ENCODE measurements at regions of chr12 and their contacts with region 1.

Region 1: DNA sequence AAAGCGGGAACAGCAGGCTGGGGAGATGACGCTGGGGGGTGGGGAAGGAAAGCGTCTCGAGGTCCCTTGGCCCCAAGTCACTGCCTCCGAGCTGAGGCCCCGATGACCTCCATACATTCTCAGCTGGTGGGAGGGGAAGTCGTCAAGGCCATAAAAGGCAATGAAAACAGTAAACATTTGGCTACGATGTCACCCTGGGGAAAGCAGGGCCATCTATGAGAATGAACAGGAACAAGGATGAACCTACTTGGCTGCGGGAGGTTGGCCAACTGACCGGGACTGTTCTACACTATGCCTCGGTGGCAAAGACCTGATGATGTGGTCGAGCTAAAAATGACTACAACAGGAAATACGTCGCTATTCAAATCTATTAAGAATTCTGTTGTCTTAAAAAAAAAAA is 19.5 kb downstream of the PRKAB1 start:
- DNase-seq: no peak
- ATAC-seq: no peak
- H3K4me3 ChIP-seq: no peak overlapping the region
- H3K27ac ChIP-seq: no peak overlapping the region
- H3K4me1 ChIP-seq: peaks cover 6% of the 10 kb centered on the region
- H3K27me3 ChIP-seq: no peaks in the 10 kb centered on the region
- CTCF ChIP-seq: no peak
- POLR2A ChIP-seq: no peak
- RAD21 ChIP-seq: no peak

Region 2: DNA sequence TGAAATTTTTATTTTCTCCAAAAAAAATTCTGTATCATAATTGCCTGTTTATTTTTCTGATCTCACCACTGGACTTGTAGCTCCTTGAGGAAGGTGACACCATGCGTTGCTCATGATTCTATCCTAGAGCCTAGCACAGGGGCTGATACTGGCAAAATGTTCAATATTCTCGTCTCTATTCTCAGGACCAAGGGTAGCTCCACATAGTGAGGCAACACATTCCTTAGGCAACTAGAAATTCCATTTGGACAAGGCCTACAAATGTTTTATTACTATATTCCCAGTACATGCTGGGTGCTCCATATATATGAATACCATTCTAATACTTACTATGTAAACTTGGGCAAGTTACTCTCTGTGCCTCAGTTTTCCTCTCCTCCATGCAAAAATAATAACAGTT is 340.0 kb before region 1 on chr12:
- CTCF ChIA-PET with region 1: no interaction called
- POLR2A ChIA-PET with region 1: no interaction called
- dilution Hi-C with region 1: no loop called
- in situ Hi-C with region 1: no loop called
- intact Hi-C with region 1: no loop called
- DNase-seq: no peak
- ATAC-seq: no peak
- H3K4me3 ChIP-seq: no peak overlapping the region
- H3K27ac ChIP-seq: no peak overlapping the region
- H3K4me1 ChIP-seq: no peaks in the 10 kb centered on the region
- H3K27me3 ChIP-seq: no peaks in the 10 kb centered on the region
- CTCF ChIP-seq: no peak
- POLR2A ChIP-seq: no peak
- RAD21 ChIP-seq: no peak

Region 3: GRCh38 chr12:119363490-119363889 is 323.9 kb before region 1 on chr12:
- CTCF ChIA-PET with region 1: no interaction called
- POLR2A ChIA-PET with region 1: no interaction called
- dilution Hi-C with region 1: no loop called
- in situ Hi-C with region 1: no loop called
- intact Hi-C with region 1: no loop called
- DNase-seq: no peak
- ATAC-seq: no peak
- H3K4me3 ChIP-seq: no peak overlapping the region
- H3K27ac ChIP-seq: no peak overlapping the region
- H3K4me1 ChIP-seq: no peaks in the 10 kb centered on the region
- H3K27me3 ChIP-seq: no peaks in the 10 kb centered on the region
- CTCF ChIP-seq: no peak
- POLR2A ChIP-seq: no peak
- RAD21 ChIP-seq: no peak

Region 4: GRCh38 chr12:119479121-119479659 is 208.2 kb before region 1 on chr12:
- CTCF ChIA-PET with region 1: no interaction called
- POLR2A ChIA-PET with region 1: no interaction called
- dilution Hi-C with region 1: no loop called
- in situ Hi-C with region 1: no loop called
- intact Hi-C with region 1: no loop called
- DNase-seq: no peak
- ATAC-seq: no peak
- H3K4me3 ChIP-seq: no peak overlapping the region
- H3K27ac ChIP-seq: no peak overlapping the region
- H3K4me1 ChIP-seq: no peaks in the 10 kb centered on the region
- H3K27me3 ChIP-seq: no peaks in the 10 kb centered on the region
- CTCF ChIP-seq: no peak
- POLR2A ChIP-seq: no peak
- RAD21 ChIP-seq: no peak

Region 5: DNA sequence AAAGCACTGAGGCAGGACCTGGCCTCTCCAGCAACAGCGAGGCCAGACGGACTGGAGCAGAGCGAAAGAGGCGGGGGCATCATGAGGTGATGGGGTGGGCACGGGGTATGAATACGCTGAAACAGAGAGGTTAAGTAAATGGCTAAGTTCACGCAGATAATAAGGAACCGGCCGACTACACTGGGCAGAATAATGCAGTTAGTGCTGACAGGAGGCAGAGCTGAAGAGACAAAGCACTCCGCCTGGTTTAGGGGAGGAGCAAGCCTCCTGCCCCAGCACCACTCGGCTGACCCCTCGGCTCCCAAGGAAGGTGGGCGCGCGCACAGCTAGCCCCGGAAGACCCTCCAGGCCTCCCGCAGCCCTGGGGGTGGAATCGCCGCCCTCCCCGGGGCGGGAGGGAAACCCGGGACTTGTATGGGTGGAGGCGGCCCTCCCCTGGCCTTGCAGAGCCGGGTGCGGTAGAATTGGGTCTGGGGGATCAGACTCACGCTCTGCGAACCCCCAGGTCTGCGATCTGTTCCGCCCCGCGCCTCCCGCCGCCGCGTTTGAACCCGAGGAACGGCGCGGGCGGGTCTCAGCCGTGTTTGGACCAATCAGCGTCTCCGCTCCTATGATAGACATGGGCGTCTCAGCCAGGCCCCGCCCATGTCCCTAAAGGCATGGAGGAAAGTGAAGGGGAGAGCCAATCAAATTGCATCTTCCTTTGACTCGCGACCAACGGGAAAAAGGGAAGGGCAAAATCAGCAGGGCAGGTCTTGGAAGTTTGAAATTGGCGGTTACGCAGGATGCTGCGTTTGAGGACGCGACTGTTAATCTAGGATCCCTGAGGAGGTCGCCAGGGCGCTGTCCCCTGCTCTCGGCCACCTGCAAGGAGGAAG is 189.6 kb after region 1 on chr12 and contains the start of gene CIT:
- CTCF ChIA-PET with region 1: no interaction called
- POLR2A ChIA-PET with region 1: interaction called, 18 read pairs
- dilution Hi-C with region 1: no loop called
- in situ Hi-C with region 1: no loop called
- intact Hi-C with region 1: no loop called
- DNase-seq: peak; percentile 93
- ATAC-seq: peak; percentile 100
- H3K4me3 ChIP-seq: peak within 1 kb of the TSS; percentile 60
- H3K27ac ChIP-seq: peak within 1 kb of the TSS; percentile 27; the same call in 1 of the 2 replicates
- H3K4me1 ChIP-seq: no peaks in the 10 kb centered on the region
- H3K27me3 ChIP-seq: no peaks in the 10 kb centered on the region
- CTCF ChIP-seq: no peak
- POLR2A ChIP-seq: no peak
- RAD21 ChIP-seq: no peak
- total RNA-seq, gene CIT: 21.0 and 23.1 TPM in 2 replicates

Measured in IMR-90 (cell line).